ENCODE measurements at regions of chr9 and their contacts with region 1.

Region 1: DNA sequence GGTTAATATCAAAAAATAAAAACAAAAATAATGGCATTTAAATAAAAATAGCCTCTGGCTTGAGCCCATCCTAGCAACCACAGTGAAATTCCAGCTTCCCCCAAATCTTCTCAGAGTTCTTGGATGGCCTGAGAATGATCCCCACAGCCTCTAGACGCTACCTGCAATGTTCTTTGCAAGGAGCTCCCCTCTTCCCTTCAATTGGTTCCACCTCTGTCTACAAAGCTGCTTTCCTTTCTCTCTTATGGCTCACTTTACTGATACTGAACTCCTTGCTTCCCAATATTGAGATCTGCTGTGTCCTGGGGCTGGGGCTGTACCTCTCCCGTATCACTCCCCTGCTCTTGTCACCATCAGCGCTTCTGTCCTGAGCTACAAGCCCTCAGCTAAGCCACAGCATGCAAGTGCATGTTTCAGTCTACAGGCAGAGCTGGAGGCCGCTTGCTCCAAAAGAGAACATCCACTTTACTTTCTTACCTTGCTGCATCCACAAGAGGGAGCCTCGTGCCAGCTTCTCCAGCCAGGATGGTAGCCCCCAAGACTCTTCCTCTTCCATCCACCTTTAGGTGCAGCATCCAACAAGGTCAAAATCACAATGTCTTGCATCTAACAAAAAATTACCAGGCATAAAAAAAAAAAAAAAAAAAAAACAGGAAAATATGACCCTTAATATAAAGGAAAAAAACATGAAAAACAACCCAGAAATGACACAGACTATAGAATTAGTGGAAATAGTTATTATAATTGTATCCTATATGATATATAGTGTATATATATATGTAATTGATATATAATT is 57.4 kb upstream of the PRSS3 start:
- DNase-seq: peak; percentile 32
- ATAC-seq: peak; percentile 94
- H3K4me3 ChIP-seq: no peak overlapping the region
- H3K27ac ChIP-seq: no peak overlapping the region
- H3K4me1 ChIP-seq: no peaks in the 10 kb centered on the region
- H3K27me3 ChIP-seq: no peaks in the 10 kb centered on the region
- CTCF ChIP-seq: peak; percentile 86

Region 2: DNA sequence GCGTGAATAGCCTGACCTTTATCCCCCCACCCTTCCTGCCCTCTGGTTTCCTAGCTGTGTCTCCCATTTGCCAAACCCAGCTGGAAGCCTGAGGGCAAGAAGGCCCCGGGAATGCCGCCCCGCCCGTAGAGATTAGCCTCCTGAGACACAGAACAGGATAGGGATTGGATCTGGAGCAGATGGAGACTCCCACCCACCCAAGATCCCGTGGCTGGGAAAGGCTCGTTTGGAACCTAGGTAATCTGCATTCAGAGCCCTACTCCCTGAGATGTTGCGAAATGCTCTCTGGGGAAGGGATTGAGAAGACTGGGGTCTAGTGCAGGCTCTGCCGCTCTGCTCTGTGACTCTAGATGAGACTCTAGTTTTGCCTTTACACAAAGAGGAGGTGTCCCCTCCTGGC is 301.6 kb before region 1 on chr9:
- CTCF ChIA-PET with region 1: no interaction called
- POLR2A ChIA-PET with region 1: interaction called, 21 read pairs
- in situ Hi-C with region 1: no loop called
- intact Hi-C with region 1: no loop called
- DNase-seq: no peak
- ATAC-seq: no peak
- H3K4me3 ChIP-seq: no peak overlapping the region
- H3K27ac ChIP-seq: no peak overlapping the region
- H3K4me1 ChIP-seq: no peaks in the 10 kb centered on the region
- H3K27me3 ChIP-seq: no peaks in the 10 kb centered on the region
- CTCF ChIP-seq: no peak

Region 3: DNA sequence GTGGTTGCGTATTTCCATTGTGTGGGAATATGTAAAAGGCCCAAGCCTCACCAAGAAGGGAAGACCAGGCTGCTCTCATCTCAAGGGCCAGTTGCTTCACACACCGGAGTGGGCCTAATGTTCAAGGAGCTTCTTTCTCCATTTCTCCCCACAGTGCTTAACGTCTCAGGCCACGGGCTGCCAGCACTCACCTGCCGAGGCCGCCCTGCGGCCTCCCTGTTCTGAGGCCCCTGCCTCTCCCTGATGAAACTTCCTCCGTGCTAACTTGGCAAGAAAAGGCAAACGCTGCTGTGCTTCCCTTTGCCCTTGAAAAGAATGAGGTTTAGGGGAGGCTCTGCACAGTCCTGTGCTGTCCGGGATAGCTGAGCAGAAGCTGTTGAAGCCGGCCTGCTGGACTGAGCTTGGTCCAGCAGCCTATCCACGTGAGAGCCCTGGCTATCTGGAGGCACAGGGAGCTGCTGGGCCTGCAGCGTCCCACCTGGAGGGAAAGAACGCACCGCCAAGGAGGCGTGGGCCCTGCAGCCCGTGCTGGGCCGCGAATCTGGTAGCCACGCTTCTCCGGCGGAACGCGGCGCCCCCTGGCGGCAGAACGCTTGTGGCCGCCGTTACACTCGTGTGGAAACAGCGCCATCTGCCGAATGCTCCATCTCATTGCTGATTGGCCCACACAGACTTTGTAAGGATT is 16.2 kb before region 1 on chr9:
- CTCF ChIA-PET with region 1: interaction called, 12 read pairs
- POLR2A ChIA-PET with region 1: no interaction called
- in situ Hi-C with region 1: no loop called
- intact Hi-C with region 1: no loop called
- DNase-seq: peak; percentile 67
- ATAC-seq: peak; percentile 86
- H3K4me3 ChIP-seq: peak overlapping the region in 1 of 2 experiments; percentile 23; a peak in 1 of 4 replicates
- H3K27ac ChIP-seq: no peak overlapping the region
- H3K4me1 ChIP-seq: no peaks in the 10 kb centered on the region
- H3K27me3 ChIP-seq: peaks cover 7% of the 10 kb centered on the region
- CTCF ChIP-seq: peak; percentile 99

Region 4: GRCh38 chr9:33786681-33787080 is 48.7 kb after region 1 on chr9:
- CTCF ChIA-PET with region 1: interaction called, 17 read pairs
- POLR2A ChIA-PET with region 1: no interaction called
- in situ Hi-C with region 1: no loop called
- intact Hi-C with region 1: no loop called
- DNase-seq: no peak
- ATAC-seq: no peak
- H3K4me3 ChIP-seq: no peak overlapping the region
- H3K27ac ChIP-seq: no peak overlapping the region
- H3K4me1 ChIP-seq: peaks cover 4% of the 10 kb centered on the region; the same call in 1 of the 2 replicates
- H3K27me3 ChIP-seq: 0 out of 2 replicates have a peak, but pooled peaks cover 2% of the 10 kb centered on the region
- CTCF ChIP-seq: no peak

Region 5: GRCh38 chr9:33924978-33925797 is 187.2 kb after region 1 on chr9:
- CTCF ChIA-PET with region 1: interaction called, 14 read pairs
- POLR2A ChIA-PET with region 1: no interaction called
- in situ Hi-C with region 1: no loop called
- intact Hi-C with region 1: no loop called
- DNase-seq: no peak
- ATAC-seq: peak; percentile 55
- H3K4me3 ChIP-seq: no peak overlapping the region
- H3K27ac ChIP-seq: peak overlapping the region; percentile 23; the same call in 1 of the 2 replicates
- H3K4me1 ChIP-seq: peaks cover 7% of the 10 kb centered on the region; the same call in 1 of the 2 replicates
- H3K27me3 ChIP-seq: no peaks in the 10 kb centered on the region
- CTCF ChIP-seq: no peak

Region 6: GRCh38 chr9:34384368-34385165 is 646.6 kb after region 1 on chr9:
- CTCF ChIA-PET with region 1: no interaction called
- POLR2A ChIA-PET with region 1: no interaction called
- in situ Hi-C with region 1: no loop called
- intact Hi-C with region 1: no loop called
- DNase-seq: no peak
- ATAC-seq: no peak
- H3K4me3 ChIP-seq: no peak overlapping the region
- H3K27ac ChIP-seq: no peak overlapping the region
- H3K4me1 ChIP-seq: peaks cover 9% of the 10 kb centered on the region
- H3K27me3 ChIP-seq: no peaks in the 10 kb centered on the region
- CTCF ChIP-seq: no peak

Measured in Panc1 (cell line).